ENCODE measurements at regions of chr5 and their contacts with region 1.

Region 1: DNA sequence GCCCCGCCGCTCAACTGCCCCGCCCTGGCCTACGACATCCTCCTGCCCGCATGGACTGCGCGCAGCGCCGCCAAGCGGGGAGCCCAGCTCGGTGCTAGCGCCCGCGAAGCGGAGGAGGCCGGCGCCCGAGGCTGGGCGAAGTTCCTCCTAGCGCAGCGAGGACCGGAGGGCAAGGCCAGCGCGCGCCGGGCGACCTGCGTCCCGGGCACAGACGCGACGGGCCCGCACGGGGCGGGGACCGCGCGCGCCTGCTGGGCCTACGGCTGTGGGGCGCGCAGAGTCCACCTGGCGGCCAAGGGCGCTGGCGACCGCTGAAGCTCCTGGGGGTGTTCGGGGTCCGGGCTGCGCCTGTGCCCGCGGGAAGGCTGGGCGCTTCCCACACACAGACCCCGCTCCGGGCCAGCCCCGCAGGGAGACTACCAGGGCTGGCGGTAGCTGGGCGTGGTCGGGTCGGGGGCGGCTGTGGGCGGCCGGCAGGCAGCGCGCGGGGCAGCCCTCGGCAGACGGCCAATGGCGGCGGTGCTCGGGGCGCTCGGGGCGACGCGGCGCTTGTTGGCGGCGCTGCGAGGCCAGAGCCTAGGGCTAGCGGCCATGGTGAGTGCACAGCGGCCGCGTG is at the start of gene PCBD2:
- DNase-seq: peak; percentile 95
- H3K4me3 Mint-ChIP-seq: peak within 1 kb of the TSS; percentile 98
- H3K27ac Mint-ChIP-seq: peak within 1 kb of the TSS; percentile 99
- H3K4me1 Mint-ChIP-seq: peaks cover 17% of the 10 kb centered on the region
- H3K27me3 Mint-ChIP-seq: no peaks in the 10 kb centered on the region
- total RNA-seq, gene PCBD2: 9.6 to 10.5 TPM

Region 2: DNA sequence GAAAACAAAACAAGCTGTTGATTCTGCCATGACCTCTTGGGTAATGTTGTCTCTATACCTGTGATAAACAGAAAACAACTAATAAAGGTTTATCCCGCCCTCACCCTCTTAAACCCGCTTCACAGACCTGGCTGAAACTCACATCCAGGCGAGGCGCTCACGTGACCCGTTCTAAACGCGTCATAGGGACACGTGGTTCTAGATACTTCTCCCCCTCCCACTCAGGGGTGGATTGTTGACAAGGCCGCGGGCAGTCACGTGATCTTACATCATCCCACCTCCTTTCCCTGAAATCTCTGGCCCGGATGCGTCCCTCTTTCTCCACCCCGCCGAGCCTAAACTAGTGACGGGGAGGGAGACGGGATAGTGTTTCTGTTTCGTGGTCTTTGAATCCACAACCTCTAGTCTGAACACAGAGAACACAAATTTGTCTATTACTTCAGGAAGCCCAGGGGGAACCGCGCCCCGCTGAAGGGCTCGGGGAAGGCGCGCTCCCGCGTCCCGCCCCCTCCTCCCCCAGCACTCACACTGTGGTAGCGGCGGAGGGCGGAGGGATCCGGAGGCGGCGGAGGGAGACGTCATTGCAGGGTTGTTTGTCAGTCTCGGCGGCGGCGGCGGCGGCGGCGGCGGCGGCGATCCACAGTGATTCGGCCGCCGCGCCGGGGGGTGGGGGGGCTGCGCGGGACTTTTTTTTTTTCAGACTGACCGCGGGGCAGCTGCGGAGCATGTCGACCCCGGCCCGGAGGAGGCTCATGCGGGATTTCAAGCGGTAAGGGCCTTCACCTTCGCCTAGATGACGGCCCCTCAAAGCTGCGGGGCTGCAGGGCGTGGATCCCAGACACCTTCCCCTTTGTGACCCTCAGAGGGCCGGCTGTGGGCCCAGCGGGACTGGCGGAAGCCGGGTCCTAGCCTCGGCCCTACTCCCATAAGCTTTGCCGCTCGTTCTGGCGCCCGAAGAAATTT is 533.6 kb before region 1 on chr5 and contains the start of gene UBE2B:
- CTCF ChIA-PET with region 1: no interaction called
- intact Hi-C with region 1: loop called (anchors 1 kb)
- DNase-seq: peak; percentile 99
- H3K4me3 Mint-ChIP-seq: peak within 1 kb of the TSS; percentile 98
- H3K27ac Mint-ChIP-seq: peak within 1 kb of the TSS; percentile 99
- H3K4me1 Mint-ChIP-seq: peaks cover 58% of the 10 kb centered on the region
- H3K27me3 Mint-ChIP-seq: no peaks in the 10 kb centered on the region
- total RNA-seq, gene UBE2B: 116 to 129 TPM

Region 3: DNA sequence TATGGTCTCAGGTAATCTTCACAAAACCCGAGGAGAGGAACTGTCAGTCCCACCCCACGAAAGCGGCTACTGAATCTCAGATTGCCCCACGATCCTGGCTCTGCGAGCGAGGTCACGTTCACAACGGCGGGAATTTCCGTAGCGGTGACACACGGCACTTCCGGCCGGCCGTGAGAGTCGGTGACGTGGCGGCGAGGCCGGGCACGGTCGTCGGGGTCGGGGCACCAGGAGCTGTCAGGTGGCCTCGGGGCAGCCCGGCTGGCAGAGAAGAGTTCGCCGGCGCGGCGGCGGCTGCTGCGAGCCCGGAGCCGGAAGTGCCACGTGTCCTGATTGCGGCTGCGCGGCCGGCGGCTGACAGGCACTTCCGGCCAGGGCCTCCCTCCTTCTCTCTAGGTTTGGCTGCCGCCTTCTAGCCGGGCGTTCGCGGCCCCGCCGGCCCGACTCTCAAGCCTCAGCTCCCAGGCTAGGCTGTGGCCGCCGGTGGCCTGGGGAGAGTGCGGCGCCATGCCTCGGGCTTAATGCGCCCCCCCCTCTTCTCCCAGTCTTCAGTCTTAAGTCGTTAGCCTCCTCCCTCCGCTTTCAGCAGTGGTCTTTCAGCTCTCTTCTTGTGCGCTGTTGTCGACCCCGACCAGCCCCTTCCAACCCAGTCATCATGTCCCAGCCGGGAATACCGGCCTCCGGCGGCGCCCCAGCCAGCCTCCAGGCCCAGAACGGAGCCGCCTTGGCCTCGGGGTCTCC is 256.1 kb before region 1 on chr5 and contains the start of gene SEC24A:
- CTCF ChIA-PET with region 1: interaction called, 4 read pairs
- intact Hi-C with region 1: loop called (anchors 1 kb)
- DNase-seq: peak; percentile 92
- H3K4me3 Mint-ChIP-seq: peak within 1 kb of the TSS; percentile 89
- H3K27ac Mint-ChIP-seq: peak within 1 kb of the TSS; percentile 100
- H3K4me1 Mint-ChIP-seq: peaks cover 35% of the 10 kb centered on the region
- H3K27me3 Mint-ChIP-seq: no peaks in the 10 kb centered on the region
- total RNA-seq, gene SEC24A: 16.6 to 18.5 TPM

Region 4: GRCh38 chr5:134845852-134846640 is 58.7 kb before region 1 on chr5 and contains the start of gene C5orf24:
- CTCF ChIA-PET with region 1: interaction called, 13 read pairs
- intact Hi-C with region 1: loop called (anchors 1 kb)
- DNase-seq: peak; percentile 96
- H3K4me3 Mint-ChIP-seq: peak within 1 kb of the TSS; percentile 88
- H3K27ac Mint-ChIP-seq: peak within 1 kb of the TSS; percentile 97
- H3K4me1 Mint-ChIP-seq: peaks cover 32% of the 10 kb centered on the region
- H3K27me3 Mint-ChIP-seq: no peaks in the 10 kb centered on the region
- total RNA-seq, gene C5orf24: 17.6 to 21.2 TPM

Region 5: GRCh38 chr5:134917070-134917815 is 12.5 kb after region 1 on chr5:
- CTCF ChIA-PET with region 1: interaction called, 4 read pairs
- intact Hi-C with region 1: loop called (anchors 1 kb)
- DNase-seq: no peak
- H3K4me3 Mint-ChIP-seq: no peak overlapping the region
- H3K27ac Mint-ChIP-seq: no peak overlapping the region
- H3K4me1 Mint-ChIP-seq: peaks cover 12% of the 10 kb centered on the region
- H3K27me3 Mint-ChIP-seq: no peaks in the 10 kb centered on the region

Measured in activated naive CD4-positive, alpha-beta T cell treated with anti-CD3 and anti-CD28 coated beads for 36 hours (primary cell).